Mammary epithelial cell (primary cell): ENCODE measurements at regions of chr1 and their contacts with region 1.

Region 1: GRCh38 chr1:166479052-166479631 is 312.3 kb upstream of the FAM78B start:
- DNase-seq: peak; percentile 9
- H3K4me3 ChIP-seq: no peak overlapping the region
- H3K27ac ChIP-seq: no peak overlapping the region
- H3K4me1 ChIP-seq: no peaks in the 10 kb centered on the region
- H3K27me3 ChIP-seq: no peaks in the 10 kb centered on the region
- CTCF ChIP-seq: peak; percentile 67 to 70

Region 2: DNA sequence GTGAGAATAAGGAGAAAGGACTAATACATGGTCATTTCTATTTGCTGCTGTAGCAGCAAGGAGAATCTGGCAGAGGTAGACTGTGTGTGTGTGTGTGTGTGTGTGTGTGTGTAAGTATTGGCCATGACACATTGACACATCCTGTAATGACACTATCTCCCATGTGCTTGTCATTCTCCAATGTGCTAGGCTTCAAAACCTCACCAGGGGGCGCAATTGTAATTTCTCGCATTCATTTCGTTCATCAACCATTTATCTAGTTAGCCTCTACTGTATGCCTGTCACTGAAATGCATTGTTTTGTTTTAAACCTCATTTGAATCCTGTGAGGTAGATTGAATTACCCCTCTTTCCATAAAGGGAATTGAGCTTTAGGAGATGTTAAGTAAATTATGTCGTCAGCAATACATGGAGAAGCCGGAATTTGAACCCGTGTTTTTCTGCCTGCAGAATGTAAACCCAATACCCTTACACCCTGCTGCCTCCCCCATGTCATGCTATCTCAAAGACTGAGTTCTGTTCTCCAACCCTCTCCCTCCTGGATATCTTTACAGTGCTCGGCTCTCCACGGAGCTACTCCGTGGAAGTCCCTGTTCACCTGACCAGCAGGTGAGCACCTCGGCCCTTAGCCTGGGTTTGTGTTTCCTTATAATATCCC is 550.9 kb before region 1 on chr1:
- CTCF ChIA-PET with region 1: interaction called, 6 read pairs
- dilution Hi-C with region 1: no loop called
- in situ Hi-C with region 1: no loop called
- intact Hi-C with region 1: loop called (anchors 1 kb)
- DNase-seq: peak; percentile 60
- H3K4me3 ChIP-seq: no peak overlapping the region
- H3K27ac ChIP-seq: no peak overlapping the region
- H3K4me1 ChIP-seq: no peaks in the 10 kb centered on the region
- H3K27me3 ChIP-seq: no peaks in the 10 kb centered on the region
- CTCF ChIP-seq: peak; percentile 64 to 78

Region 3: DNA sequence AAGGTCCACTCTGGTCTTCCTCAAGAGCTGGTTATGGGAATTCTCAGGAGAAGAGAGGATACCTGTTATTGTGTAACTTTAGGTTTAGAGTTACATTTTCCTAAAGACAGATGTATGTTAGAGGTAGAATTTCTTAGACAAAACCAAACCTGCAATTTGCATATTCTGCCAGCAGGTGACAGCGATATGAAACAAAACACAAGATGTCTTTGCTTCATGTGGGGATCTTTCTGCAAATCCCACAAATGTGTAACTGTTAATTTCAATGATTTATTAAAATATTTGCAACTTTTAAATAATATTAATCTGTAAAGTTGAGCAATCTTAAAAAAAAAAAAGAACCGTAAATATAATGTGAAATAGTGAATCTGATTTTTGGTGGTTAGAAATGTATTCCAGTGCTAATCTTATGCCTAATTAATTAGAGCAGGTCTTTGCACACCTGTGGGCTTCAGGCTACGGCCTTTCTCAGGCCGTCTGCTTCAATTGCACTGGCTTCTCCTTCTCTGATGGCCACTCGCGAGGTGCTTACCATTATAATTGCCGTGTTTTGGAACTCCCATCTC is 345.8 kb before region 1 on chr1:
- CTCF ChIA-PET with region 1: interaction called, 3 read pairs
- dilution Hi-C with region 1: no loop called
- in situ Hi-C with region 1: no loop called
- intact Hi-C with region 1: loop called (anchors 2 kb)
- DNase-seq: peak; percentile 5
- H3K4me3 ChIP-seq: no peak overlapping the region
- H3K27ac ChIP-seq: no peak overlapping the region
- H3K4me1 ChIP-seq: no peaks in the 10 kb centered on the region
- H3K27me3 ChIP-seq: no peaks in the 10 kb centered on the region
- CTCF ChIP-seq: peak; percentile 75 to 90

Region 4: GRCh38 chr1:166383137-166383536 is 96.0 kb before region 1 on chr1:
- CTCF ChIA-PET with region 1: no interaction called
- dilution Hi-C with region 1: no loop called
- in situ Hi-C with region 1: no loop called
- intact Hi-C with region 1: no loop called
- DNase-seq: no peak
- H3K4me3 ChIP-seq: no peak overlapping the region
- H3K27ac ChIP-seq: no peak overlapping the region
- H3K4me1 ChIP-seq: no peaks in the 10 kb centered on the region
- H3K27me3 ChIP-seq: no peaks in the 10 kb centered on the region
- CTCF ChIP-seq: no peak